ENCODE measurements at regions of chr6 and their contacts with region 1.

Region 1: DNA sequence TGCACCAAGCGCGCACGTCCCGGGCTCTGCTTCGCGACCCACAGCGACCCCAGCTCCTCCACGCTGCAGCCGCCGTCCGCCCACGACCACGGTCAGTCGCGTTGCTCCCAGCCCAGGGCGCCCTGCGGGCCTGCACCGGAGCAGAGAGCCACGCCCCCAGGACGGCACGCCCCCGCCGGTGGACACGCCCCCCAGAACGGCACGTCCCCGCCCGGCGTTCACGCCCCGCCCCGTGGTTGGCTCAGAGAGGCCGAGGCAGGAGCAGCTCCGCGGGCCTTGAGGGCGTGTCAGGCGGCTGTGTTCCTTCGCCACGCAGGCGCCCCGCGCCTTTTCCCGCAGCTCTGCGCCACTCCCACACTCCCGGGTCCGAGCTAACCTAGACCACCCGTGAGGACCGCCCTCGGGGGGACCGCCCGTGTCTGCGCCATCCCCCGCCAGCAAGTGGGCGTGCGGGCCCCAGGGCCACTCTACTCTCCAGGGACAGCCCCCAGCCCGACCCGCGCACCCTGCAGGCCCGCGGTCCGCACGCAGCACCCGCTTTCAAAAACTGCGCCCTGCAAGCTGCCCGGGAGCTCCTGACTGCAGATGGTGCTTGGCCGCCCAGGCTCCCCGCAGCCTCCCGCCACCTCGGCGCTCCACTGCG is at the start of gene RNASET2:
- DNase-seq: peak; percentile 100
- ATAC-seq: peak; percentile 82
- H3K4me3 Mint-ChIP-seq: peak within 1 kb of the TSS; percentile 91
- H3K27ac Mint-ChIP-seq: peak within 1 kb of the TSS; percentile 100
- H3K4me1 Mint-ChIP-seq: peaks cover 76% of the 10 kb centered on the region
- H3K27me3 Mint-ChIP-seq: no peaks in the 10 kb centered on the region
- CTCF ChIP-seq: no peak
- total RNA-seq, gene RNASET2: 118 and 135 TPM in 2 replicates

Region 2: DNA sequence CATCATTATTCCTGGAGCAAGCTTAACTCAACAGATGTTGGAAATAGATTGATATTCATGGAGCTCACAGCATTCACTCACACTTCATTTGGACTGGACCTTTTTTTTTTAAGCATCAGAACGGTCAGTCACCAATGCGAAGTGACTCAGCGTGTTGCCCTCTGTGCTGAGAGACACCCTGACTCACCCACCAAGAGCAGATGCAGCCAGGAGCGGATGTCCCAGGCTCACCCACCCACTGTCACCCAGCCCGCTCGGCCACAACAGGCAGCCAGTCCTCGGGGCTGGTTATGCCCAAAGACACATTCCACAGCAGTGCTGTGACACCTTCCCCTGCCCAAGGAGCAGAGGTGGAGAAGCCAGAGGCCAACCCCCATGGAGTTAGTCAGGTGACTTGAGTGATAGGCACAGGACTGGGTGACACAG is 15.9 kb before region 1 on chr6:
- CTCF ChIA-PET with region 1: interaction called, 3 read pairs
- POLR2A ChIA-PET with region 1: interaction called, 18 read pairs
- intact Hi-C with region 1: loop called (anchors 2 kb)
- DNase-seq: no peak
- ATAC-seq: no peak
- H3K4me3 Mint-ChIP-seq: no peak overlapping the region
- H3K27ac Mint-ChIP-seq: peak overlapping the region; percentile 50
- H3K4me1 Mint-ChIP-seq: peaks cover 26% of the 10 kb centered on the region
- H3K27me3 Mint-ChIP-seq: no peaks in the 10 kb centered on the region
- CTCF ChIP-seq: no peak

Region 3: GRCh38 chr6:166969390-166970002 is 12.9 kb after region 1 on chr6:
- CTCF ChIA-PET with region 1: interaction called, 3 read pairs
- POLR2A ChIA-PET with region 1: interaction called, 12 read pairs
- intact Hi-C with region 1: no loop called
- DNase-seq: no peak
- ATAC-seq: no peak
- H3K4me3 Mint-ChIP-seq: no peak overlapping the region
- H3K27ac Mint-ChIP-seq: peak overlapping the region; percentile 47
- H3K4me1 Mint-ChIP-seq: peaks cover 15% of the 10 kb centered on the region
- H3K27me3 Mint-ChIP-seq: no peaks in the 10 kb centered on the region
- CTCF ChIP-seq: no peak